Activated CD4-positive, alpha-beta T cell treated with anti-CD3 and anti-CD28 coated beads for 36 hours (primary cell): ENCODE measurements at regions of chr6 and their contacts with region 1.

Region 1: DNA sequence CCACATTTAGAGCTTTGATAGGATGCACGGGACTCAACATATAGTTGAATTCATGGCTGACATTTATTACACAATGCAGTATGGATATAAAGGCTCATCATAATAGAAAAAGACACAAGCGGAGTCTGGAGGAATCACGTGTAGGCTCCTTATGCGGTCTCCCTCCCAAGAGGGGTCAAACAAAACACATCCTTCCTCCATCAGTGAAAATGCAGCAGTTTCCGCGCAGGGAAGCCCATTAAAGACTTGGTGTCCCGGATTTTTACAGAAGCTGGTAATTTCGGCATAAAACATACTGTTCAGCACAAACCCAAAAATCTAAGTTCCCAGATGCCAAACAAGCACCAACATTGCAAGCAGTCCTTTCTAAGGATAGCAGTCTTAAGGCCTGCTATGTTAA is 1.1 kb downstream of the USP45 start:
- DNase-seq: no peak
- ATAC-seq: no peak
- H3K4me3 Mint-ChIP-seq: peak overlapping the region; percentile 88
- H3K27ac Mint-ChIP-seq: no peak overlapping the region
- H3K4me1 Mint-ChIP-seq: peaks cover 29% of the 10 kb centered on the region
- H3K27me3 Mint-ChIP-seq: no peaks in the 10 kb centered on the region

Region 2: GRCh38 chr6:99568103-99568933 is 54.2 kb after region 1 on chr6 and contains the start of gene CCNC:
- CTCF ChIA-PET with region 1: interaction called, 3 read pairs
- POLR2A ChIA-PET with region 1: no interaction called
- intact Hi-C with region 1: loop called (anchors 1 kb)
- DNase-seq: peak; percentile 94
- ATAC-seq: peak; percentile 98
- H3K4me3 Mint-ChIP-seq: peak within 1 kb of the TSS; percentile 97
- H3K27ac Mint-ChIP-seq: peak within 1 kb of the TSS; percentile 98
- H3K4me1 Mint-ChIP-seq: peaks cover 25% of the 10 kb centered on the region
- H3K27me3 Mint-ChIP-seq: no peaks in the 10 kb centered on the region
- total RNA-seq, gene CCNC: 50.7 to 67.3 TPM